BJ (cell line): ENCODE measurements at regions of chr17 and their contacts with region 1.

Region 1: GRCh38 chr17:8894673-8895578 is 27.5 kb upstream of the PIK3R6 start:
- DNase-seq: peak; percentile 7
- H3K4me3 ChIP-seq: no peak overlapping the region
- H3K27me3 ChIP-seq: no peaks in the 10 kb centered on the region; the same call in 1 of the 2 replicates
- CTCF ChIP-seq: peak; percentile 78

Region 2: GRCh38 chr17:8803531-8804420 is 91.2 kb before region 1 on chr17:
- CTCF ChIA-PET with region 1: interaction called, 12 read pairs
- POLR2A ChIA-PET with region 1: no interaction called
- DNase-seq: no peak
- H3K4me3 ChIP-seq: no peak overlapping the region
- H3K27me3 ChIP-seq: peaks cover under 1% of the 10 kb centered on the region
- CTCF ChIP-seq: no peak

Region 3: GRCh38 chr17:8909586-8910270 is 14.8 kb after region 1 on chr17:
- CTCF ChIA-PET with region 1: interaction called, 20 read pairs
- POLR2A ChIA-PET with region 1: no interaction called
- DNase-seq: no peak
- H3K4me3 ChIP-seq: no peak overlapping the region
- H3K27me3 ChIP-seq: peaks cover 6% of the 10 kb centered on the region; the same call in 1 of the 2 replicates
- CTCF ChIP-seq: no peak